Activated CD4-positive, alpha-beta T cell treated with anti-CD3 and anti-CD28 coated beads for 36 hours (primary cell): ENCODE measurements at regions of chr11 and their contacts with region 1.

Region 1: GRCh38 chr11:16825968-16826367 is 87.5 kb downstream of the C11orf58 start:
- DNase-seq: no peak
- ATAC-seq: no peak
- H3K4me3 Mint-ChIP-seq: no peak overlapping the region
- H3K27ac Mint-ChIP-seq: no peak overlapping the region
- H3K4me1 Mint-ChIP-seq: peaks cover 10% of the 10 kb centered on the region
- H3K27me3 Mint-ChIP-seq: no peaks in the 10 kb centered on the region

Region 2: GRCh38 chr11:16862746-16863145 is 36.8 kb after region 1 on chr11:
- CTCF ChIA-PET with region 1: interaction called, 13 read pairs
- POLR2A ChIA-PET with region 1: no interaction called
- intact Hi-C with region 1: loop called in 1 of 2 experiments (anchors 2 kb)
- DNase-seq: peak; percentile 25
- ATAC-seq: no peak
- H3K4me3 Mint-ChIP-seq: no peak overlapping the region
- H3K27ac Mint-ChIP-seq: no peak overlapping the region
- H3K4me1 Mint-ChIP-seq: peaks cover 34% of the 10 kb centered on the region
- H3K27me3 Mint-ChIP-seq: no peaks in the 10 kb centered on the region